Left ventricle myocardium inferior (tissue), 1 donor: ENCODE measurements at regions of chr2 and their contacts with region 1.

Region 1: DNA sequence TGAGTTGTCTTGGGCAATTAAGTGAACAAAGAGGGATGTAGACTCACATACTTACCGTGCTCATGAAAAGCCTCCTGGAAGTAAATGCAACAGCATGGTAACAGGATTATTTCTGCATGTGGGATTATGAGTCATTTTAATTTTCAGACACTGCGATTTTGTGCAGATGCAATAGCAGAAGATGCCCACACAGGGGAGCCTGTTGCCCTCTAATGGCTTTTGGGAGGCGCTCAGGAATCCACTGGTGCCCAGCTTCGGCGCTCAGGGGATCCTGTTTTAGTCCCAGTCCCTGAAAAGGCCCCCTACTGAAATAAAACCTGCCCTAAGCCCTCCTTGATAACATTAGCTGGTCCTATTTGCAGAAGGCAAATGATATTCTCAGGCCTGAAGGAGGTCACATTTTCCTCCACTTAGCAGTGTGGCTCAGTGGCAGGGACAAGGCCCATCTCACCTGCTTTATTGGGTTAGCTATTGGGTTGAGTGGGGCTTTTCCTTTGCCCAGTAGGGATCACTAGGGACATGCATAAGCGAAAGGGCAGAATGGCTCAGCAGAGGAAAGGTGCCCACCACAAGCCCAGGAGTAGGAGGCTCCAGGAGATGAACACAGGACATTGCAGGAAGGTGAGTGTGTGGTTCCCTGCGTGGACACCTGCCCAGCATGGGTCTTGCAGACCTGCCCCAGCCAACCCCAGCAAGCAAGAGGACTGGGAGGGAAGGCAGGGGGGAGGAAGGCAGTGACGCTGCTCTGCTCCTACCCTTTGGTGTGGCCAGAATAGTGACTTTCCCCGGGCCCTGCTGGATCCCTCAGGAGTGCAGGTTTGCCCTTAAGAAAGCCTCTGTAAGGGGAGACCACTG is 26.5 kb upstream of the KCNS3 start:
- DNase-seq: peak; percentile 24
- H3K4me3 ChIP-seq: no peak overlapping the region
- H3K27ac ChIP-seq: no peak overlapping the region
- H3K4me1 ChIP-seq: no peaks in the 10 kb centered on the region
- H3K27me3 ChIP-seq: peaks cover 28% of the 10 kb centered on the region
- CTCF ChIP-seq: peak; percentile 91

Region 2: DNA sequence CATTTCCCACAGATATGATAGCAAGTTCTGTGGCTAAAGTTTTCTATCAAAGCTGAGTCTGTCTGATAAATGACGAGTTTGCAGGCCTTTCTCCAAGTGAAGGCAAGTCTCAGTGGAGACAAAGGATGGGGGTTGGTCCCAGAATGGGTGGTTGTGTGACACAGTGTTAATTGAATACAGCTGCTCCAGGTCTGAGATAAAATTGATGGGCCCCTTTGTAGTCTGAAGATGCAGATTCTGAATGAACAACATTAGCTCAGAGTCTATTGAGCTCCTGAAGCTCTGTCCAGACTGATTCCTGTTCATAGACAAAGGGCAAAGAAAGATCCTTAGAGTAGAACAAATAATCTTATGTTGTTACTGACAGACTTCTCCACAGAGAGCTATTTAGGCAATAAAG is 889.5 kb before region 1 on chr2:
- intact Hi-C with region 1: no loop called
- DNase-seq: no peak
- H3K4me3 ChIP-seq: no peak overlapping the region
- H3K27ac ChIP-seq: no peak overlapping the region
- H3K4me1 ChIP-seq: no peaks in the 10 kb centered on the region
- H3K27me3 ChIP-seq: no peaks in the 10 kb centered on the region
- CTCF ChIP-seq: no peak

Region 3: GRCh38 chr2:17765408-17765807 is 86.5 kb before region 1 on chr2:
- intact Hi-C with region 1: no loop called
- DNase-seq: no peak
- H3K4me3 ChIP-seq: no peak overlapping the region
- H3K27ac ChIP-seq: peak overlapping the region; percentile 39
- H3K4me1 ChIP-seq: peaks cover 22% of the 10 kb centered on the region
- H3K27me3 ChIP-seq: no peaks in the 10 kb centered on the region
- CTCF ChIP-seq: no peak

Region 4: GRCh38 chr2:18178736-18179349 is 326.9 kb after region 1 on chr2:
- intact Hi-C with region 1: loop called (anchors 10 kb)
- DNase-seq: no peak
- H3K4me3 ChIP-seq: no peak overlapping the region
- H3K27ac ChIP-seq: no peak overlapping the region
- H3K4me1 ChIP-seq: peaks cover 5% of the 10 kb centered on the region
- H3K27me3 ChIP-seq: no peaks in the 10 kb centered on the region
- CTCF ChIP-seq: peak; percentile 82

Region 5: DNA sequence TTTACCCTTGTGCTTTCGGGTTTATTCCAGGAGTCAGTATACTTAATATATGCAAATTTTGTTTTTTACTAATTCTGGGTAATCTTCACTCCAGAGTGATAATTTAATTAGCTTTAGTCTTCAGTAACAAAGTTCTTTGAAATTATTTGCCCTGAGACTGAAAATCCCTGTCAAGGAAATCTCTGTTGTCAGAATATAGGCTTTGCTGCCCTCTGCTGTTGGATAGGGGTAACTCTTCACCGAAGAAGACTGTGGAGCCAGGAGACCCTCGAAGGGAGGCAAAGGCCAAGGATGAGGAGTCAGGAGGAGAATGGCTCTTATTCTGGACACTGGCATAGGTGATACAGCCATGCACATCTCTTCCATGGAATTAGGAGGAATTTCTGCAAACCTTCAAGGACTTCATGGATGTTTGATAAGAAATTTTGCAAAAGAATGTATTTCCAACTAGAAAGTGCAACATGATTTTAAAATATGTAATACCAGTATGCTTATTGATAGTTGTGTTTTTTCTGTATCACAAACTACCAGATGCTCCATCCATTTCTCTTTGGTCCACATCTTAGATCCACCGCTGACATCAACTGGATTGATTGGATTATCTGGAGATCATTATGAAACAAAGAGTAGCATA is 526.2 kb after region 1 on chr2:
- intact Hi-C with region 1: loop called (anchors 10 kb)
- DNase-seq: no peak
- H3K4me3 ChIP-seq: no peak overlapping the region
- H3K27ac ChIP-seq: no peak overlapping the region
- H3K4me1 ChIP-seq: no peaks in the 10 kb centered on the region
- H3K27me3 ChIP-seq: peaks cover 16% of the 10 kb centered on the region
- CTCF ChIP-seq: peak; percentile 83